ENCODE measurements at regions of chr17 and their contacts with region 1.

Region 1: DNA sequence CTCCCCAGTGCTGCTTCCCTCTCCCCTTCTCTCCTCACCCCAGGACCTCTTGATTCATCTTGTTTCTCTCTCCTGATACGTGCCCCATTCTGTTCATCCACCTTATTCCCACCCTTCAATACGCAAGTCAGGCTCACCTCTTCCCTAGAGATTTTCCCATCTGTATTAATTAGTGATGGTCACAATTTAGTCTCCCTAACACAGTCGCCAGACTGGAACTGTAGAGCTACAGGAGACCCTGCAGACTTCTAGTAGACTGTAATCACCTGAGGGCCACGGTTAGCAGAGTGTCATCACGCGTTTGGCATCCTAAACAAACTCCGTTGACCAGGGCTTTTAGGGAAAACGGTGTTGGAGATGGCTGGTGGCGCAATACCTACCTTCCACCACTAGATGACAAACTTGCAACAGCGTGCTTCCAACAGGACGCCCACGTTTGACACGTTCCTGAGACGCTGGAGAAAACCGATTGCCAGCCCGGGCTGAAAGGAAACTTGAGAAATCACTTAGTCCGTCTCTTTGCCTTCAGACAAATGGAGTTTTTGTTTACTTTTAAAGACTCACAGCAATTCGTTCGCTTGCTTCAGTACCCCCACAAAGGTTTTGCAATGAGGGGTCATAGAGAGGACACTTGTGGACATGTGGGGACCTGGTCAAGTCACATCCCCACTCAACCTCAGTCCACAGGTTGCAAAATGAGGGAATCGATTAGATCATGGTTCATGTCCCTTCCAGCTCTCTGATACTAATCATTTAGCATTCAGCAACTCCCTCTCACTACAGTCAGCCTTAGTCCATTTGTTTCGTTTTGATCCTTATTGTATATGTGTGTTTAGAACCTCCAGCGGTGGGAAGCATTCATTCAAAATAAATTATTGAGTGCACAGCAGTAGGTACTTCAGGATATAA is 20.6 kb downstream of the MYL4 start:
- DNase-seq: peak; percentile 83
- ATAC-seq: peak; percentile 94
- H3K4me3 Mint-ChIP-seq: peak overlapping the region; percentile 60
- H3K27ac Mint-ChIP-seq: peak overlapping the region; percentile 35
- H3K4me1 Mint-ChIP-seq: peaks cover 16% of the 10 kb centered on the region
- H3K27me3 Mint-ChIP-seq: peaks cover 15% of the 10 kb centered on the region

Region 2: DNA sequence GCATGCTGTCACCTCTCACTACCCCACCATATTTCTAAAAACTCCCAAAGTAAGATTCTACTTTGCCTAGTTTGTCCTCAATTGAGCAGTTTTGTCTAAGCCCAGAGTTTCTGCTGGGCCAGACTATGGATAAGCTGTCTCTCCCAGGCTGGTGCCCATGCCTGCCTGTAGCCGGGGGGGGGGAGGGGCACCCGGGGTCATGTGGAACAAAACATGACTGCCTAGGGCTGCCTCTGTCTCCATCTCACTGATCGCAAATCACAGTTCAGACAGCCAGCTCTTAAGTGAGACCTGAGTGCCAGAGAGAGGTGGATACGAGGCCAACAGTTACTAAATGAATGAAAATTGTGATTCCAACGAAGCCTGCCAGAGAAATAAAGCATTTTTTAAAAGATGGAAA is 172.0 kb before region 1 on chr17:
- CTCF ChIA-PET with region 1: no interaction called
- POLR2A ChIA-PET with region 1: no interaction called
- DNase-seq: no peak
- ATAC-seq: no peak
- H3K4me3 Mint-ChIP-seq: no peak overlapping the region
- H3K27ac Mint-ChIP-seq: no peak overlapping the region
- H3K4me1 Mint-ChIP-seq: peaks cover 2% of the 10 kb centered on the region
- H3K27me3 Mint-ChIP-seq: no peaks in the 10 kb centered on the region

Region 3: DNA sequence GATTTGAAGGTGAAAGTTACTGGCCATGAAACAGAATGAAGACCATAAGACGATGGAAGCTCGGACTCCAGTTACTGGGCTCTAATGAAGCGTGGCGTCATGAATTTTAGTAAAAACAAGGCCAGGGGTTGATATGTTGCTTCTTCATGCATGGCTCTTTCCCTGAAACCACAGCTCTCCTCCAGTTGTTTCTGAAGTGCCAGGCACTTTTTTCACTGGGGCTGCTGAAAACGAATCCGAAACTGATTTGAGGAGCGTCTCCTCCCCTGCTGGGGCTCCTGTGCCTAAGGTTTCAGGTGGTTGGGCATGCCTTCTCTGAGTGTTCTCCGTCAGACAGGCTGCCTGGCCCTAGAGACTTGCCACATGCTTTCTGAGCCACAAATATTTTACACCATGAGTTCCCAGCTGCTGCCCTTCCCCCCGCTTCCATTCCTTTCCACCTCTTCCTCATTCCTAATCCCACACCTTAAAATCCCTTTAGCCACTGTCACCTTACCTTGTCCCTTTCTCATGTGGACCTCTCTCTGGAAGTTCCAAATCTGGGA is 24.3 kb before region 1 on chr17:
- CTCF ChIA-PET with region 1: interaction called, 10 read pairs
- POLR2A ChIA-PET with region 1: no interaction called
- DNase-seq: peak; percentile 82
- ATAC-seq: peak; percentile 79
- H3K4me3 Mint-ChIP-seq: peak overlapping the region; percentile 66
- H3K27ac Mint-ChIP-seq: peak overlapping the region; percentile 89
- H3K4me1 Mint-ChIP-seq: peaks cover 53% of the 10 kb centered on the region
- H3K27me3 Mint-ChIP-seq: peaks cover 3% of the 10 kb centered on the region

Region 4: GRCh38 chr17:47315451-47316266 is 85.9 kb after region 1 on chr17:
- CTCF ChIA-PET with region 1: interaction called, 36 read pairs
- POLR2A ChIA-PET with region 1: no interaction called
- DNase-seq: peak; percentile 57
- ATAC-seq: peak; percentile 57
- H3K4me3 Mint-ChIP-seq: no peak overlapping the region
- H3K27ac Mint-ChIP-seq: no peak overlapping the region
- H3K4me1 Mint-ChIP-seq: no peaks in the 10 kb centered on the region
- H3K27me3 Mint-ChIP-seq: peaks cover 9% of the 10 kb centered on the region

Measured in activated CD8-positive, alpha-beta T cell treated with anti-CD3 and anti-CD28 coated beads, Interleukin-2, amount 10 ng/mL, durations not matched to agents 7 days and 5 days (primary cell).